PC-3 (cell line): ENCODE measurements at regions of chr5 and their contacts with region 1.

Region 1: GRCh38 chr5:168654211-168654721 is 75.1 kb upstream of the PANK3 start:
- DNase-seq: no peak
- ATAC-seq: no peak
- H3K4me3 ChIP-seq: no peak overlapping the region
- H3K27ac ChIP-seq: no peak overlapping the region
- H3K4me1 ChIP-seq: peaks cover 22% of the 10 kb centered on the region
- H3K27me3 ChIP-seq: no peaks in the 10 kb centered on the region
- CTCF ChIP-seq: no peak

Region 2: DNA sequence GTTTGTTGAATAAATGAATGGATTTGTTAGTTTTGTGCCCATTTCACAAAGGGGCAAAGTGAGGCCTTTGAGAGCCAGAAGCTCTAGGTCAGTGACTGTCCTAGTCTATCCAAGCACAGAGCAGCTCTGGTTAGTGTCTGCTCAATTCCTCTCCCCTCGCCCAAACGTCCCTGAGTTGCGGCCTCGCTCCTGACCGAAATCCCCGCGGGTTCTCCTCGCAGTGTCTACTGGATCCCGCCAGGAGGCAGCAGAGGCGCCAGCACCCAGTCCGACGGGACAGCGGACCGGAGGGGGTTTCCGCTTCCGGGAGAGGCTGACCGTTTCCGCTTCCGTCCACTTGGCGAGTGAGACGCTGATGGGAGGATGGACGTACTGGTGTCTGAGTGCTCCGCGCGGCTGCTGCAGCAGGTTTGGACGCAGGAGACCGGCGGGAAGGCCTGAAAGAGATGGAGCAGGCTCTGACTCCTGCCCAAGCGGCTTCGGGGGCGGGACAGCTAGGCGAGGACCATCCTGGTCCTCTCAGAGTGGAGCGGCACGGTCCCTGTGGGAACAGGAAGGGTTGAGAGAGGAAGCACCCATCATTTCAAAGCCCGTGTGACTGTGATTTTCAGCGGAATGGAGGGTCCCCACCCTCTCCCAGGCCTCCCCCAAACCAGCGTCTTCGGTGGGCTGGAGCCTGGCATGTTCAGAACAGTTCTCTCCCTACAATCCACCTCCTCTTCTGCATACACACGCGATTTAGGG is 168.0 kb before region 1 on chr5 and contains the start of gene RARS1:
- CTCF ChIA-PET with region 1: no interaction called
- POLR2A ChIA-PET with region 1: no interaction called
- intact Hi-C with region 1: loop called (anchors 5 kb)
- DNase-seq: peak; percentile 89
- ATAC-seq: peak; percentile 94
- H3K4me3 ChIP-seq: peak within 1 kb of the TSS; percentile 100
- H3K27ac ChIP-seq: peak within 1 kb of the TSS; percentile 9; the same call in 1 of the 2 replicates
- H3K4me1 ChIP-seq: peaks cover 9% of the 10 kb centered on the region; the same call in 1 of the 2 replicates
- H3K27me3 ChIP-seq: no peaks in the 10 kb centered on the region
- CTCF ChIP-seq: peak; percentile 81
- total RNA-seq, gene RARS1: 63.6 and 78.1 TPM in 2 replicates

Region 3: GRCh38 chr5:168579488-168580226 is 74.6 kb before region 1 on chr5:
- CTCF ChIA-PET with region 1: no interaction called
- POLR2A ChIA-PET with region 1: no interaction called
- intact Hi-C with region 1: loop called (anchors 1 kb)
- DNase-seq: peak; percentile 94
- ATAC-seq: peak; percentile 96
- H3K4me3 ChIP-seq: peak overlapping the region; percentile 97
- H3K27ac ChIP-seq: peak overlapping the region; percentile 74
- H3K4me1 ChIP-seq: peaks cover 17% of the 10 kb centered on the region
- H3K27me3 ChIP-seq: no peaks in the 10 kb centered on the region
- CTCF ChIP-seq: no peak

Region 4: GRCh38 chr5:168612996-168613395 is 41.3 kb before region 1 on chr5:
- CTCF ChIA-PET with region 1: no interaction called
- POLR2A ChIA-PET with region 1: interaction called, 13 read pairs
- intact Hi-C with region 1: loop called (anchors 5 kb)
- DNase-seq: peak; percentile 15
- ATAC-seq: peak; percentile 69
- H3K4me3 ChIP-seq: no peak overlapping the region
- H3K27ac ChIP-seq: no peak overlapping the region
- H3K4me1 ChIP-seq: 0 out of 2 replicates have a peak, but pooled peaks cover 5% of the 10 kb centered on the region
- H3K27me3 ChIP-seq: no peaks in the 10 kb centered on the region
- CTCF ChIP-seq: no peak

Region 5: DNA sequence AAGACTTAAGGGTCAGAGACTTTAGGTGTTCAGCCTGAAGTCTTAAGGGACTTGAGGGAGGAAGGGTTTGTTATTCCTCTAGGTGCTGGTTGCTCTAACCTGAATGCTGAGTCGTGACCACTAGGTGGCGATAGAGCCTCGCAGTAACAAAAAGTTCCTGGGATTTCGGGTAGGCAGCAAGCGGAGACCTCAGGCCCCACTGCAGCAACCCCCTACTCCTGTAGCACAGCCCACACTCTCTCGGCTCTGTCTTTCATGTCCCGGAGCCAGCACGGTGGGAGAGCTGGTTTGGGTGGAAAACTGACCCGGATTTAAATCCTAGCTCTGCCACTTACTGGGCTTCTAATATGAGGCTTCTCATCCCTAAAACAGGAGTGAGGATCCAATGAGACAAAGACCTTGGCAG is 25.3 kb after region 1 on chr5:
- CTCF ChIA-PET with region 1: no interaction called
- POLR2A ChIA-PET with region 1: no interaction called
- intact Hi-C with region 1: no loop called
- DNase-seq: peak; percentile 76
- ATAC-seq: peak; percentile 87
- H3K4me3 ChIP-seq: no peak overlapping the region
- H3K27ac ChIP-seq: no peak overlapping the region
- H3K4me1 ChIP-seq: no peaks in the 10 kb centered on the region
- H3K27me3 ChIP-seq: no peaks in the 10 kb centered on the region
- CTCF ChIP-seq: peak; percentile 84